ENCODE measurements at regions of chr22 and their contacts with region 1.

Region 1: GRCh38 chr22:24555157-24556039 is at the start of gene SNRPD3:
- DNase-seq: peak; percentile 100
- H3K4me3 Mint-ChIP-seq: peak within 1 kb of the TSS; percentile 97
- H3K27ac Mint-ChIP-seq: peak within 1 kb of the TSS; percentile 100
- H3K4me1 Mint-ChIP-seq: peaks cover 48% of the 10 kb centered on the region
- H3K27me3 Mint-ChIP-seq: no peaks in the 10 kb centered on the region
- total RNA-seq, gene SNRPD3: 158 to 166 TPM

Region 2: DNA sequence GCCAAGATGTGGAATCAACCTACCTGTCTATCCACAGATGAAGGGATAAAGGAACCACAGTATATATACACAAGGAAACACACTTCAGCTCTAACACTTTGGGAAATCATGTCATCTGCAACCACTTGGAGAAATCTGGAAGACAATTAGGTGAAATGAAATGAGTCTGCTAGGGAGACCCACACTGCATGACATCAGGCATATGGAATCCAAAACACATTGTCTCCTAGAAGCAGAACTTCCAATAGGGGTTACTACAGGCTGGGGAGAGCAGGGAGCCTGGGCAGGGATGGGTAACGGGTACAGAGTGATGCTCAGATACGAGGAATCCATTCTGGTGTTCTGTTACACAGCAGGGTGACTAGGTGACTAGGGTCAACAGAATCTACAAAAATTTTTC is 846.3 kb before region 1 on chr22:
- CTCF ChIA-PET with region 1: no interaction called
- intact Hi-C with region 1: loop called (anchors 5 kb)
- DNase-seq: no peak
- H3K4me3 Mint-ChIP-seq: no peak overlapping the region
- H3K27ac Mint-ChIP-seq: peak overlapping the region; percentile 79
- H3K4me1 Mint-ChIP-seq: peaks cover 63% of the 10 kb centered on the region
- H3K27me3 Mint-ChIP-seq: no peaks in the 10 kb centered on the region

Region 3: DNA sequence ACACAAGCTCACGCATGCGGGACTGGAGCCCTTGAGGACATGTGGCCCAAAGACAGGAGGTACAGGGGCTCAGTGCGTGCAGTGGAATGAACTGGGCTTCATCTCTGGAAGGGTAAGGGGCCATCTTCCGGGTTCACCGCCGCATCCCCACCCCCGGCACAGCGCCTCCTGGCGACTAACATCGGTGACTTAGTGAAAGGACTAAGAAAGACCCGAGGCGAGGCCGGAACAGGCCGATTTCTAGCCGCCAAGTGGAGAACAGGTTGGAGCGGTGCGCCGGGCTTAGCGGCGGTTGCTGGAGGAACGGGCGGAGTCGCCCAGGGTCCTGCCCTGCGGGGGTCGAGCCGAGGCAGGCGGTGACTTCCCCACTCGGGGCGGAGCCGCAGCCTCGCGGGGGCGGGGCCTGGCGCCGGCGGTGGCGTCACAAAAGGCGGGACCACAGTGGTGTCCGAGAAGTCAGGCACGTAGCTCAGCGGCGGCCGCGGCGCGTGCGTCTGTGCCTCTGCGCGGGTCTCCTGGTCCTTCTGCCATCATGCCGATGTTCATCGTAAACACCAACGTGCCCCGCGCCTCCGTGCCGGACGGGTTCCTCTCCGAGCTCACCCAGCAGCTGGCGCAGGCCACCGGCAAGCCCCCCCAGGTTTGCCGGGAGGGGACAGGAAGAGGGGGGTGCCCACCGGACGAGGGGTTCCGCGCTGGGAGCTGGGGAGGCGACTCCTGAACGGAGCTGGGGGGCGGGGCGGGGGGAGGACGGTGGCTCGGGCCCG is 661.3 kb before region 1 on chr22 and contains the start of gene MIF:
- CTCF ChIA-PET with region 1: no interaction called
- intact Hi-C with region 1: loop called (anchors 1 kb)
- DNase-seq: peak; percentile 96
- H3K4me3 Mint-ChIP-seq: peak within 1 kb of the TSS; percentile 95
- H3K27ac Mint-ChIP-seq: peak within 1 kb of the TSS; percentile 97
- H3K4me1 Mint-ChIP-seq: peaks cover 19% of the 10 kb centered on the region
- H3K27me3 Mint-ChIP-seq: no peaks in the 10 kb centered on the region
- total RNA-seq, gene MIF: 1,489 to 1,512 TPM

Region 4: DNA sequence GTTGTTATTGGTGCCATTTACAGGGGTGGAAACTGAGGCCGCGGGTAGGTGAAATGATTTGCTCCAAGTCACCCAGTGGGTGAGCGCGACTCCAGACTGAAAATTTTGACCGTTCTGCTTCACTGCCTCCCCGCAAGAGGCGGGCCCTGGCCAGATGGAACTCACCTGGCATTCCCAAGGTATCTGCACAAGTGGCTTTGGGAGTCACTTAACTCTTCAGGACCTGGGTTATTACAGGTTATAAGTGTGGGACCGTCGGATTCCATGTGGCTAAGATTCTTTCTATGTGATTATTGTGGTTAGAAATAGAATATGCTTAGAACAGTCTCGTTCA is 543.7 kb before region 1 on chr22:
- CTCF ChIA-PET with region 1: no interaction called
- intact Hi-C with region 1: loop called (anchors 2 kb)
- DNase-seq: no peak
- H3K4me3 Mint-ChIP-seq: peak overlapping the region; percentile 95
- H3K27ac Mint-ChIP-seq: peak overlapping the region; percentile 89
- H3K4me1 Mint-ChIP-seq: peaks cover 25% of the 10 kb centered on the region
- H3K27me3 Mint-ChIP-seq: no peaks in the 10 kb centered on the region

Region 5: GRCh38 chr22:24305260-24305692 is 250.1 kb before region 1 on chr22:
- CTCF ChIA-PET with region 1: no interaction called
- intact Hi-C with region 1: loop called (anchors 1 kb)
- DNase-seq: peak; percentile 33
- H3K4me3 Mint-ChIP-seq: no peak overlapping the region
- H3K27ac Mint-ChIP-seq: peak overlapping the region; percentile 1
- H3K4me1 Mint-ChIP-seq: peaks cover 55% of the 10 kb centered on the region
- H3K27me3 Mint-ChIP-seq: no peaks in the 10 kb centered on the region

Measured in activated naive CD4-positive, alpha-beta T cell treated with anti-CD3 and anti-CD28 coated beads for 36 hours (primary cell).